Esophagus squamous epithelium (tissue), 5 donors: ENCODE measurements at regions of chr9 and their contacts with region 1.

Region 1: GRCh38 chr9:77648234-77649120 is at the start of gene GNA14:
- DNase-seq: no peak
- H3K4me3 ChIP-seq: peak within 1 kb of the TSS; percentile 36 to 74 (median 60)
- H3K27ac ChIP-seq: peak within 1 kb of the TSS; percentile 25 to 80 (median 63)
- H3K4me1 ChIP-seq: peaks cover 8 to 49% (median 9%) of the 10 kb centered on the region in 3 donors
- H3K27me3 ChIP-seq: peaks cover 0 to 31% (median 0%) of the 10 kb centered on the region in 4 donors
- CTCF ChIP-seq: peak in 3 of 6 experiments; percentile 7 to 20 (median 7)
- POLR2A ChIP-seq: no peak
- total RNA-seq, gene GNA14: 0.35 to 4.0 (median 2.2) TPM

Region 2: GRCh38 chr9:77469515-77470231 is 178.8 kb before region 1 on chr9:
- intact Hi-C with region 1: loop called (anchors 10 kb)
- DNase-seq: no peak
- H3K4me3 ChIP-seq: no peak overlapping the region
- H3K27ac ChIP-seq: no peak overlapping the region
- H3K4me1 ChIP-seq: no peaks in the 10 kb centered on the region
- H3K27me3 ChIP-seq: no peaks in the 10 kb centered on the region
- CTCF ChIP-seq: no peak
- POLR2A ChIP-seq: no peak

Region 3: GRCh38 chr9:77495834-77496671 is 152.4 kb before region 1 on chr9:
- intact Hi-C with region 1: loop called (anchors 5 kb)
- DNase-seq: no peak
- H3K4me3 ChIP-seq: no peak overlapping the region
- H3K27ac ChIP-seq: peak overlapping the region in 3 of 4 donors; percentile 24 to 71 (median 35)
- H3K4me1 ChIP-seq: peaks cover 0 to 31% (median 25%) of the 10 kb centered on the region in 3 donors
- H3K27me3 ChIP-seq: no peaks in the 10 kb centered on the region
- CTCF ChIP-seq: no peak
- POLR2A ChIP-seq: no peak